ENCODE measurements at regions of chr17 and their contacts with region 1.

Region 1: GRCh38 chr17:74864866-74865395 is 5.2 kb upstream of the GRIN2C start:
- DNase-seq: peak; percentile 93
- H3K4me3 ChIP-seq: no peak overlapping the region
- H3K27ac ChIP-seq: no peak overlapping the region
- H3K4me1 ChIP-seq: peaks cover 21 to 90% (median 59%) of the 10 kb centered on the region in 6 donors
- H3K27me3 ChIP-seq: peaks cover 5 to 46% (median 26%) of the 10 kb centered on the region in 7 donors
- CTCF ChIP-seq: peak; percentile 94 to 98 (median 97)
- POLR2A ChIP-seq: no peak

Region 2: DNA sequence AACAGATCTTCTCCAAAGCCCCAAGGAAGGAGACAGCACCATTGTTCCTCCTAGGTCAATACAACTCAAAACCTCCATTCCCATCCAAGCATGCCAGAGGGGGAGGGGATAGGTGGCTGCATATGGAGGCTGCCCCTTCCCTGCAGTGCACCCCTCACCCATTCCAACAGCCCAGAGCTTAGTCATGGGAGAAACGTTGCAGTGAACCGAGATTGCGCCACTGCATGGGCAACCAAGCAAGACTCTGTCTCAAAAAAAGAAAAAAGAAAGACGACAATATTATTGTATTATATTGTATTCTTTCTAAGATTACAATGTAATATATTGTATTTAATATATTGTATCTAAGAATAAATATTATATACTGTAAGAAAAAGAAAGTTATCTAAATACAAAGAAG is 205.0 kb before region 1 on chr17:
- intact Hi-C with region 1: loop called (anchors 10 kb)
- DNase-seq: no peak
- H3K4me3 ChIP-seq: no peak overlapping the region
- H3K27ac ChIP-seq: no peak overlapping the region
- H3K4me1 ChIP-seq: peaks cover 0 to 7% (median 5%) of the 10 kb centered on the region in 6 donors
- H3K27me3 ChIP-seq: peaks cover 0 to 78% (median 15%) of the 10 kb centered on the region in 7 donors
- CTCF ChIP-seq: no peak
- POLR2A ChIP-seq: no peak

Region 3: DNA sequence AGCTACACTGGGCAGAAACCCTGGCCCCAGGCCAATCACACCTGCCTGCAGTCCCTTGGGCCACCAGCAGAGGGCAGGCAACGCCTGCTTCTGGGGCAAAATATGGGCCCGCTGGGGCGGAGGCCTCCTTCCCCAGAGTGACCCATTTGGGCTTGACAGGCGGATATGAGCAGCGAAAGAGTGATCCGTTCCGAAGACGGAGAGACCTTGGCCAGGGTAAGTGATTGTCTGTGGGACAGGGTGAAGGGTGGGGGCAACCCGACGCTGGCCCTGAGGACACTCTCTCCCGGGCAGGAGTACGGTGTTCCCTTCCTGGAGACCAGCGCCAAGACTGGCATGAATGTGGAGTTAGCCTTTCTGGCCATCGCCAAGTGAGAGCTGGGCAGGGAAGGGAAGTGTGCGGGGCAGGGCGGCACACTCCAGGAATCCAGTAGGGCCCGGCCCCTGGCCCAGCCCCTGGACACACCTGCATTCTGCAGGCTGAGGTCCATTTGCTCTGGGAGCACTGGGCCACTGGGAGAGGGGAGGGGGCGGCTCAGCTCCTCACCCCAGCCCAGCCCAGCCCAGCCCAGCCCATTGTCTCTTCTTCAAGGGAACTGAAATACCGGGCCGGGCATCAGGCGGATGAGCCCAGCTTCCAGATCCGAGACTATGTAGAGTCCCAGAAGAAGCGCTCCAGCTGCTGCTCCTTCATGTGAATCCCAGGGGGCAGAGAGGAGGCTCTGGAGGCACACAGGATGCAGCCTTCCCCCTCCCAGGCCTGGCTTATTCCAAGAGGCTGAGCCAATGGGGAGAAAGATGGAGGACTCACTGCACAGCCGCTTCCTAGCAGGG is 120.0 kb before region 1 on chr17:
- intact Hi-C with region 1: loop called (anchors 5 kb)
- DNase-seq: peak; percentile 97
- H3K4me3 ChIP-seq: peak overlapping the region in 2 of 8 donors; percentile 16 to 34
- H3K27ac ChIP-seq: peak overlapping the region in 7 of 8 donors; percentile 9 to 94 (median 87)
- H3K4me1 ChIP-seq: peaks cover 48 to 96% (median 88%) of the 10 kb centered on the region in 6 donors
- H3K27me3 ChIP-seq: peaks cover 0 to 5% (median 0%) of the 10 kb centered on the region in 7 donors
- CTCF ChIP-seq: peak; percentile 99 to 100 (median 99)
- POLR2A ChIP-seq: no peak

Region 4: DNA sequence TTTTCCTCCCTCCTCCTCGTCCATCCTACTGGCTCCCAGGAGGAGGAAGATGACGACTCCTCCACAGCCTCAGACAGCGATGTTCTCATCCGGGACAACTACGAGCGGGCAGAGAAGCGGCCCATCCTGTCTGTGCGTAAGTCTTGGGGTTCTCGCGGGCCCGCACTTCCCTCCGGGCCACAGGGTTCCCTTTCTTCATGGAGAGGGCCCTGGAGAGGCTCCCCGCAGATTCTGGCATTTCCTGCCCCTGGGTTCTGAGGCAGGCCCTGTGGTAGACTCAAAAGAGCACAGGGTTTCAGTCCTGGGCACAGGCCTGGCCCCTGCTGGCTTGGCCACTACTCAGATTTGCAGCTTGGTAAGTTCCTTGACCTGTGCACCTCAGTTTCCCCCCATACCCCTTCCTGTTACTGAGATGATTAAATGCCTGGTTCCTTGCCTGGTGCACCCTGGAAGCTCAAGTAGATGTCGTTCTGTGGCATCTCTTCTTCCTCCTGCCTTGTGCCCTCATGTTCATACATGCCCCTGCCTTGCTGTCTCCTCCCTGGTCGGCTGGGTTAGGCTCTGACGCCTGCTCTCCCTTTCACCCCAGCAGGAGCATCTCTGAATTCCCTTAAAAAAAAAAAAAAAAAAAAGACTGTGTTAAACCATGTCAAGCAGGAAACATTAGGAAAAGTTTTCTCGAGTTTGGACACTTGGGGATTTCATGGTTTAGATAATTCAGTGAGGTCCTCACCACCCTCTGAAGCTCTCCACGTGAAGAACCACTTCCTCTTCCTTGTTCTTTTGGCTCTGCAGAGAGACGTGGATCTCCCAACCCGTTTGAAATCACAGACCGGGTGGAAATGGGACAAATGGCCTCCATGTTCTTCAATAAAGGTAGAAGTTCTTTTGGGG is 74.5 kb before region 1 on chr17:
- intact Hi-C with region 1: loop called (anchors 5 kb)
- DNase-seq: no peak
- H3K4me3 ChIP-seq: no peak overlapping the region
- H3K27ac ChIP-seq: peak overlapping the region in 3 of 8 donors; percentile 26 to 30 (median 26)
- H3K4me1 ChIP-seq: peaks cover 9 to 38% (median 27%) of the 10 kb centered on the region in 6 donors
- H3K27me3 ChIP-seq: no peaks in the 10 kb centered on the region
- CTCF ChIP-seq: no peak
- POLR2A ChIP-seq: no peak